WTC11 (cell line): ENCODE measurements at regions of chr9 and their contacts with region 1.

Region 1: GRCh38 chr9:20941174-20941690 is 90.2 kb downstream of the HACD4 start:
- DNase-seq: peak; percentile 61
- ATAC-seq: peak; percentile 99
- H3K4me3 Mint-ChIP-seq: no peak overlapping the region
- H3K27ac Mint-ChIP-seq: no peak overlapping the region
- H3K4me1 Mint-ChIP-seq: peaks cover 21% of the 10 kb centered on the region
- H3K27me3 Mint-ChIP-seq: no peaks in the 10 kb centered on the region
- CTCF ChIP-seq: peak; percentile 70

Region 2: DNA sequence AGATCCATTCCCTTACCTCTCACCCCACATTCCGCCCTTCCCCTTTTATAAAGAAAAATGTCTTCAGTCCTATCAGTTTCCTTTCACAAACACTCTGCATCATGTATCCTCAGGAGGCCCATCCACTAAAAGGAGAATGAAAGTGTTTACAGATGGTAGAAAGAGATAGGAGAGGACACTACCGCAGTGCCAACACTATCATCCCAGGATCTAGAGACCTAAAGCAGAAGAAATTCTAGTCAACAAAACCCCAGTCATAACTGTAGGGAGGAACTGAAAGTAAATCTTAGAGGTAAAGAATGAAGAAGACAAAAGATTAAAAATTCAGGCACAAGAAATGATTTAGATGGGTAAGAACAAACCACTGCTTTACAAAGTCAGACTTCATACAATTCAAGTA is 433.0 kb before region 1 on chr9:
- CTCF ChIA-PET with region 1: no interaction called
- POLR2A ChIA-PET with region 1: no interaction called
- DNase-seq: no peak
- ATAC-seq: no peak
- H3K4me3 Mint-ChIP-seq: no peak overlapping the region
- H3K27ac Mint-ChIP-seq: 0 out of 2 replicates have a peak overlapping the region, but pooled peaks have one; percentile 6
- H3K4me1 Mint-ChIP-seq: peaks cover 19% of the 10 kb centered on the region
- H3K27me3 Mint-ChIP-seq: no peaks in the 10 kb centered on the region
- CTCF ChIP-seq: no peak

Region 3: DNA sequence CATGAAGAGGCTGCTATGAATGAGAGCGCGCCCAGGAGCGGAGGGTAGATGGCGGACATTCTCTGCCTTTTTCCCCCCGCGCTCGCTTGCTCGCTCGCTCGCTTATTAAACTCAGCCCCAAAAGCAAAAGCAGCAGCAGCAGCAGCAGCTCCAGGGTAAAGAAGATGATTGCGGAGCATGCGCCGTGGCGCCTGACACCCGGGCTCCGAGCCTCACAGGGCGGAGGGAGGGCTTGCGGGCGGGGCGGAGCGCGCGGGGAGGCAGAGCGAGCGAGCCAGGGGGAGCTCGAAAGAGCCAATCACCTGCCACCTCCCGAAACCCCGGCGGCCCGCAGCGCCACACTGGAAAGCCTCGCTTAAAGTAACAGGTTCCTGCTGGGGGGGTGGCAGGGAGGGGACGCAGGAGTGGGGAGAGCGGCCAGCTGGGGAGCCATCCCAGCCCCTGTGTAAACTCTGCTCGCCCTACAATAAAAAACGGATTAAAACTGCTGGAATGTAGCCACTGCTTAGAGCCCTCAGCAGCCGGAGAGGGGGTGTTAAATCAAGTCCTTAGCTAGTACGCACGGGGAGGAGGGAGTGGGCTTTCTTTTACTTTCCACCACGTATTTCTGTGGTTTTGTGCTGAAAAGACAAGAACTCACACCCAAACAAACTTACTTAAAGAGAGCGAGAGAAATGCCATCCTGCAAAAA is 318.8 kb before region 1 on chr9 and contains the start of gene MLLT3:
- CTCF ChIA-PET with region 1: interaction called, 40 read pairs
- POLR2A ChIA-PET with region 1: no interaction called
- DNase-seq: peak; percentile 94
- ATAC-seq: peak; percentile 87
- H3K4me3 Mint-ChIP-seq: peak within 1 kb of the TSS; percentile 73
- H3K27ac Mint-ChIP-seq: no peak within 1 kb of the TSS
- H3K4me1 Mint-ChIP-seq: peaks cover 29% of the 10 kb centered on the region
- H3K27me3 Mint-ChIP-seq: peaks cover 62% of the 10 kb centered on the region
- CTCF ChIP-seq: no peak
- total RNA-seq, gene MLLT3: 7.0 to 11.6 TPM (median 10.0 TPM) in 3 replicates

Region 4: GRCh38 chr9:20884985-20885593 is 56.1 kb before region 1 on chr9:
- CTCF ChIA-PET with region 1: interaction called, 19 read pairs
- POLR2A ChIA-PET with region 1: no interaction called
- DNase-seq: peak; percentile 65
- ATAC-seq: peak; percentile 58
- H3K4me3 Mint-ChIP-seq: no peak overlapping the region
- H3K27ac Mint-ChIP-seq: no peak overlapping the region
- H3K4me1 Mint-ChIP-seq: no peaks in the 10 kb centered on the region
- H3K27me3 Mint-ChIP-seq: no peaks in the 10 kb centered on the region
- CTCF ChIP-seq: peak; percentile 53